GM12878 (cell line): ENCODE measurements at regions of chr1 and their contacts with region 1.

Region 1: DNA sequence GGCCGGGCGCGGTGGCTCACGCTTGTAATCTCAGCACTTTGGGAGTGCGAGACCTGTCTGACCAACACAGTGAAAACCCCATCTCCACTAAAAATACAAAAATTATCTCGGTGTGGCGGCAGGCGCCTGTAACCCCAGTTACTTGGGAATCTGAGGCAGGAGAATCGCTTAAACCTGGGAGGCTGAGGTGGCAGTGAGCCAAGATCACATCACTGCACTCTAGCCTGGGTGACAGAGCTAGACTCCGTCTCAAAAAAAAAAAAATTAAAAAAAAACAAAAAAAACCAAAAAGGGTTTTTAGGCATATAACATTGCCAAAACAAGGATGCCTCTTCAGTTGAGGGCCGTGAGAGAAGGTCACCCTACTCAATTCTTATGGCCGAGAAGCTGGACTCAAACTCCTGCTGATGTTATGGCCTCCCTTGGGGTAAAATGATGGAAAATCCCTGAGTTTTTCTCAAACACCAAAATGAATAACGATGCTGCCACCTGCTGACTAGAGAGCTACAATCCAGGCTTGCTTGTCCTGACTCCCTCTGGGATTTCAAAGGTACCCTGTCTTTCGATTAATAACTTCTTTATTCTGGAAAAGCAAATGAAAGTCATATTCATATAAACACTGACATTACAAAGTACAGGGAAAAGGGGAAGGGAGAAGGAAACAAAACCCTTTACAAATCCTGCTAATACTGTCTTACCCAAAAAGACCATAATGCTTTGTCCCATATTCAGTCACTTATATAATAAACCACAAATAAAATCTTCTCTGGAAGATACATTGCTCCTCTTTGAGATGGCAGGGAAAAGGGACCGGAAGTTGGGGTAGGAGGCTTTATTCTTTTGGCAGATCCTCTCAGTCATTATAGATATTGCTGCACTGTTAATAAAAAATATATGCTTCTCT is 10.7 kb downstream of the RAB42 start:
- DNase-seq: no peak
- ATAC-seq: peak; percentile 57
- H3K4me3 ChIP-seq: no peak overlapping the region
- H3K27ac ChIP-seq: no peak overlapping the region
- H3K4me1 ChIP-seq: peaks cover 22% of the 10 kb centered on the region
- H3K27me3 ChIP-seq: no peaks in the 10 kb centered on the region
- CTCF ChIP-seq: peak; percentile 56 to 85 (median 59); a peak in 5 of 6 replicates
- EP300 ChIP-seq: no peak
- POLR2A ChIP-seq: no peak
- RAD21 ChIP-seq: peak; percentile 84

Region 2: GRCh38 chr1:28359592-28360239 is 243.1 kb before region 1 on chr1:
- CTCF ChIA-PET with region 1: interaction called, 104 read pairs
- POLR2A ChIA-PET with region 1: no interaction called
- RAD21 ChIA-PET with region 1: interaction called, 26 read pairs
- SMC1A ChIA-PET with region 1: interaction called, 48 read pairs
- in situ Hi-C with region 1: no loop called
- intact Hi-C with region 1: loop called (anchors 2 kb)
- DNase-seq: no peak
- ATAC-seq: peak; percentile 89
- H3K4me3 ChIP-seq: no peak overlapping the region
- H3K27ac ChIP-seq: no peak overlapping the region
- H3K4me1 ChIP-seq: no peaks in the 10 kb centered on the region
- H3K27me3 ChIP-seq: no peaks in the 10 kb centered on the region
- CTCF ChIP-seq: peak; percentile 65 to 73 (median 66)
- EP300 ChIP-seq: no peak
- POLR2A ChIP-seq: no peak
- RAD21 ChIP-seq: peak; percentile 57

Region 3: GRCh38 chr1:28417429-28417922 is 185.3 kb before region 1 on chr1:
- CTCF ChIA-PET with region 1: interaction called, 102 read pairs
- POLR2A ChIA-PET with region 1: no interaction called
- RAD21 ChIA-PET with region 1: interaction called, 8 read pairs
- SMC1A ChIA-PET with region 1: interaction called, 66 read pairs
- in situ Hi-C with region 1: no loop called
- intact Hi-C with region 1: no loop called
- DNase-seq: no peak
- ATAC-seq: peak; percentile 94
- H3K4me3 ChIP-seq: peak overlapping the region; percentile 48; the same call in 1 of the 2 replicates
- H3K27ac ChIP-seq: peak overlapping the region; percentile 50; the same call in 1 of the 2 replicates
- H3K4me1 ChIP-seq: peaks cover 7% of the 10 kb centered on the region
- H3K27me3 ChIP-seq: no peaks in the 10 kb centered on the region
- CTCF ChIP-seq: no peak
- EP300 ChIP-seq: no peak
- POLR2A ChIP-seq: no peak
- RAD21 ChIP-seq: no peak

Region 4: DNA sequence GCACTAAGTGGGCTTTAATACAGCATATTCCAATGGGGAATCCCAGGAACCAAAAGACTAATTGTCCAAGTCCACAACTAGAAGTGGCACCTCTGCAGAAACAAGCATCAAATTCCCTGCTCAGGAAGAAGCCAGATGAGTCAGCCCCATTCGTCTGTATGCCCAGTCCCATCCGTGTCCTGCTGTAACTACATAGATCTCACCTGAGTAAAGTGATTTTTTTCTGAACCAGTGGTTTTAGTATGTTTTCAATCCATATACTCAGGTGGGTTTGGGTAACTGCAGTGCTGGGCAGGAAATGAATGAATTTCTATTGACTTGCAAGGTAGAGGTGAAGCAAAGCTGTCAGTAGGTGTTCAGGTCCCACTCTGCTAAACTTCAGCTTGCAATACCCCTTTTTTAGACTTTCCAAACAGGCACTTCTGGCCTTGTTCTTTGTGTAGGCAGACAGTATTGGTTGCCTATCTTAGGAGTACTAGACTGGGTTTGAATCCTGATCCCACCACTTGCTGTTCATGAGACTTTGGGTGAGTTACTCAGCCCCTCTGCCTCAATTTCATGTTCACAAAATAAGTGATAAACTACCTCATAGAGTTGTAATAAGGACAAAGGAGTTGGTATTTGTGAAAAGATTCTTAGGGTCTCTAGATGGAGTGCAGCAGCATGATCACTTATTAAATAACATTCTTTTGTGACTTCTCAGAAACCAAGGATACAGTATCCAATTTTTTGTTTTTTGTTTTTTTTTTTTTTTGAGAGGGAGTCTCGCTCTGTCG is 91.9 kb before region 1 on chr1:
- CTCF ChIA-PET with region 1: interaction called, 95 read pairs
- POLR2A ChIA-PET with region 1: interaction called, 3 read pairs
- RAD21 ChIA-PET with region 1: interaction called, 32 read pairs
- SMC1A ChIA-PET with region 1: interaction called, 57 read pairs
- in situ Hi-C with region 1: loop called (anchors 5 kb)
- intact Hi-C with region 1: no loop called
- DNase-seq: no peak
- ATAC-seq: peak; percentile 11
- H3K4me3 ChIP-seq: peak overlapping the region; percentile 84
- H3K27ac ChIP-seq: peak overlapping the region; percentile 94
- H3K4me1 ChIP-seq: peaks cover 10% of the 10 kb centered on the region
- H3K27me3 ChIP-seq: no peaks in the 10 kb centered on the region
- CTCF ChIP-seq: no peak
- EP300 ChIP-seq: no peak
- POLR2A ChIP-seq: peak; percentile 67
- RAD21 ChIP-seq: no peak

Region 5: DNA sequence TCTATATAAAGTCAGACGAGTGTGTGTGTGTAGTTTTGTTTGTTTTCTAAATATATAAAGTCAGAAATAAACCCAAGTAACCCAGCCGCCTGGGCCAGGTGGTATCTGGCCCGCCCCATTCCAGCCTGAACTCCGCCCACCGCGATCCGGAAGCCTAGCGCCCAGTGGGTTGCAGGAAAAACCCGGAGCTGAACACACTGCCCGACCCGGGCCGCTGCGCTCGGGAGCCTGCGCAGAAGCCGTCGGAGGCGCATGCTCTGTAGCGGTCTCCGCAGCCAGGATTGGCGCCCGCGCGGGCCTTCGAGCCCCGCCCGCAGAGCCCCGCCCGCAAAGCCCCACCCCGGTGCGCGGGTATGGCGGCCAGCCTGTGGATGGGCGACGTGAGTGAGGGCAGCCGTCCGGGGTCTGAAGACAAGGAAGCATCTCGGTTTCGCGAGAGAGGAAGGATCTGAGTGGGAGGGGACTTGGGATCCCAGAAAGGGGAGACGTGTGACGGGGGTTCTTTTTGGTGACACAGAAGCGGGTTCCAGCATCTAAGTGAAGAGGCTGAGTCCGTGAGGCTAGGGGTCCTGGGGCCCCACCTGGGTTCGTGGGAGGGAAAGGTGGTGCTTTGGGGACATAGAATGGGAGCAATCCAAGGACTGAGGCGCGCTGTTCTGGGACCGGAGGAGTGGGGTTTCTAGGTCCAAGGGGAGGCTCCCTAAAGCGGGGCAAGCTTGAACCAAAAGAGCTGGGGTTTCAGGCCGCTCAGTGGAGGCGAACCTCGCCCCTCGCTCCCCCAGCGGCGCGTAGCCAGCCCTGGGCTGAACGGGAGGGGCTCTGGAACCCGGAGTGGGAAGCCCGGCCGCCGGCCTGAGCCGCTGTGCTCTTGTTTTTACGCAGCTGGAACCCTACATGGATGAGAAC is 49.8 kb before region 1 on chr1 and contains the start of gene TRNAU1AP:
- CTCF ChIA-PET with region 1: interaction called, 22 read pairs
- POLR2A ChIA-PET with region 1: interaction called, 7 read pairs
- RAD21 ChIA-PET with region 1: interaction called, 7 read pairs
- SMC1A ChIA-PET with region 1: interaction called, 6 read pairs
- in situ Hi-C with region 1: no loop called
- intact Hi-C with region 1: loop called (anchors 2 kb)
- DNase-seq: peak; percentile 91
- ATAC-seq: peak; percentile 95
- H3K4me3 ChIP-seq: peak within 1 kb of the TSS; percentile 87
- H3K27ac ChIP-seq: peak within 1 kb of the TSS; percentile 86
- H3K4me1 ChIP-seq: no peaks in the 10 kb centered on the region; the same call in none of the 2 replicates
- H3K27me3 ChIP-seq: no peaks in the 10 kb centered on the region
- CTCF ChIP-seq: no peak
- EP300 ChIP-seq: peak in 1 of 2 experiments; percentile 68; a peak in 1 of 4 replicates
- POLR2A ChIP-seq: peak; percentile 90
- RAD21 ChIP-seq: no peak
- polyA plus RNA-seq, gene TRNAU1AP: 53.1 to 53.8 TPM

Region 6: DNA sequence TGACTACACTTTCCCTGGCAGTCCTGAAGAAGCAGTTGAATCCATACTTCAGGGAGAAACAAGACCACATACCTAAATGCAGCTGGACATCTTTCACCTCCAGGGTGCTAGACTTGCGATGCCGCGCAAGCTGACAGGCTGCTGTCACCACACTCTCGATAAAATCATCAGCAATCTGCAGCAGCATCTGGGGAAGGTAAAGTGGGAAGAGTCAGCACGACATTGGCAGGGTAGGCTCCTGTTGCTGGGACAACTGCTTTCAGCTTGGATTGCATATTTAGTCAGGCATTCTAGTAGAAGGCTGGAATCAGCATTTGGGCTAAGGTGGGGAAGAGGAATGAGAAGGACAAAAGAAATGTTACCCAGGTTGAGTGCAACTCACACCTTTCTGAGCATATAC is 10.4 kb after region 1 on chr1:
- CTCF ChIA-PET with region 1: interaction called, 11 read pairs
- POLR2A ChIA-PET with region 1: no interaction called
- RAD21 ChIA-PET with region 1: interaction called, 4 read pairs
- SMC1A ChIA-PET with region 1: no interaction called
- in situ Hi-C with region 1: no loop called
- intact Hi-C with region 1: no loop called
- DNase-seq: no peak
- ATAC-seq: no peak
- H3K4me3 ChIP-seq: no peak overlapping the region
- H3K27ac ChIP-seq: no peak overlapping the region
- H3K4me1 ChIP-seq: no peaks in the 10 kb centered on the region
- H3K27me3 ChIP-seq: no peaks in the 10 kb centered on the region
- CTCF ChIP-seq: no peak
- EP300 ChIP-seq: no peak
- POLR2A ChIP-seq: no peak
- RAD21 ChIP-seq: no peak

Region 7: DNA sequence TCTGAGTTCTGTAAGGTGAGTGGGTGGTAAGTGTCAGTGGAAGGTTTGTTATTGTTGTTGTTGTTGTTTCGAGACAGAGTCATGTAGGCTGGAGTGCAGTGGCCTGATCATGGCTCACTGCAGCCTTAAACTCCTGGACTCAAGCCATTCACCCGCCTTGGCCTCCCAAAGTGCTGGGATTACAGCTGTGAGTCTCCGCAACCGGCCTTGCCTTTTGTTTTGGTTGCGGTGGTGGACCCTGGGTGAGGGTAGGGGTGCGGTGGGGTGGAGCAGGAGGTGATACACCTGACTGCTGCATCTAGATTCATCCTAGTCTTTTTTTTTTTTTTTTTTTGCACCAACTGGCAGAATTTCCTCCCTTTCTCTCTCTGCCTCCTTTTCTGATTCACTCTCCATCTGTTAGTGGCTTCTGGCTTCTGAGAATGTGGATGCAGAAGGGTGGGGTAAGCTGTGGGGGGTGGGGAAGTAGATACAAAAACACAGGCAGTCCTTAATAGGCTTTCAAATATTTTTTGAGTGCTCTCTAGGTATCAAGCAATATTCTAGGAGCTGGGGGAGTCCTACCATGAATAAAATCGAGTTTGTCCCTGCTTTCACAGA is 61.2 kb after region 1 on chr1:
- CTCF ChIA-PET with region 1: no interaction called
- POLR2A ChIA-PET with region 1: no interaction called
- RAD21 ChIA-PET with region 1: no interaction called
- SMC1A ChIA-PET with region 1: no interaction called
- in situ Hi-C with region 1: no loop called
- intact Hi-C with region 1: no loop called
- DNase-seq: no peak
- ATAC-seq: no peak
- H3K4me3 ChIP-seq: no peak overlapping the region
- H3K27ac ChIP-seq: no peak overlapping the region
- H3K4me1 ChIP-seq: no peaks in the 10 kb centered on the region
- H3K27me3 ChIP-seq: no peaks in the 10 kb centered on the region
- CTCF ChIP-seq: no peak
- EP300 ChIP-seq: no peak
- POLR2A ChIP-seq: no peak
- RAD21 ChIP-seq: no peak